Activated naive CD4-positive, alpha-beta T cell treated with anti-CD3 and anti-CD28 coated beads for 36 hours (primary cell): ENCODE measurements at regions of chr11 and their contacts with region 1.

Region 1: DNA sequence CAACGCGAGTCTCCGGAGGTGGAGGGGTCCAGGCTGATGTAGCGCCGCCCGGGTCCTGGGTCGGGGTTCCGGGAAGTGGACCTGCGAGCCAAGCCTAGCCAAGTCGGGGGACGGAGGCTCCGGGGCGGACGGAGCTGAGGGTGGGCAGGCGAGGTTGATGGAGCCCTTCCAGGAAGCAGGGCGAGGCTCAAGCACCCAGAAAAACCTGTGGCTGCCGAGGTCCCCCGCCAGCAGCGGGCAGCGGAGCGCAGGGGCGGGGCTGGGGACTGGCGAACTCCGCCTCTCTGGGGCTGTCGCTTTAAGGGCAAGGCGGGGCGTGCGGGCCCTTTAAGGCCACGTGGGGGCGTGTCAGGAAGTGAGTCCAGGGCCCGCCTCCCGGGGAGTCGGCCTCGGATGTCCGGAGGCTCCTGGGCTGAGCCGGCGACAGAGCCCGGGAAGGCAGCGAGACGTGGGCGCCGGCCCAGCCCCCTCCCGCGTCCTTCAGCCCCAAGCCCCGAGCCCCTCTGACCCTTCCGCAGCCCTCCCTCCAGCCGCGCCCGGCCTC is at the start of gene SLC35C1:
- DNase-seq: peak; percentile 97
- H3K4me3 Mint-ChIP-seq: peak within 1 kb of the TSS; percentile 90
- H3K27ac Mint-ChIP-seq: peak within 1 kb of the TSS; percentile 81
- H3K4me1 Mint-ChIP-seq: peaks cover 36% of the 10 kb centered on the region
- H3K27me3 Mint-ChIP-seq: no peaks in the 10 kb centered on the region
- total RNA-seq, gene SLC35C1: 5.6 to 6.5 TPM

Region 2: DNA sequence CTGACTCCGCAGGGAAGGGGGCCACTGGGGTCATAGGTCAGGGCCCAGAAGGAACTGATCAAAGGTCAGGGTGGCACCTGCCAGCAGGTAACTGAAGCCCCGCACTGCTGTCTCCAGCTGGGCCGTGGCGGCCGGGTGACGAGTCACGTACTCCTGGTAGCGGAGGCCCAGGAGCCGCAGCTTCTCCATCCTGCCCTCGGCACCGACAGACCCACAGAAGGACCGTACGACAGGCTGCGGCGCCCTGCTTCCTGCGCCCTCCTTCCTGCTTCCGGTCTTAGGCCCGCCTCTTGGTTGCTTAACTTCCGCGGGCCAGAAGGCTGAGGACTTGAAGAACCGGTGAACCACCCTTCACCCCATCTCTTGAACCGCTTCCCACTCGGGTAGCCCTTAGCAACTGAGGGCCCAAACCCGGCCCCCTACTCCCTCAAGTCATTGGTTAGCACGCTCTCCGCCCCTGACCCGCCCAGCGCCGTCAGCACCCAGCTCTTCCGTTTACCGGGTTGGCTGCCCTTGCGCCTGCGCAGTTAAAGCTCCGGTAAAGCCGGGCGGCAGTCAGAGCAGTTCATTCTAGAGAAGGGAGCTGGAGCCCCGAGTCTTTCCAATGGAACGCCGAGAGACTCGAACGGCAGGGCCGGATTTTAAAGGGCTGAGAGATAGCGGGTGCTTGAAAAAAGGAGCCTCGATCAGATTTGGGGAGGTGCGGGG is 112.9 kb after region 1 on chr11 and contains the start of gene PEX16:
- CTCF ChIA-PET with region 1: no interaction called
- intact Hi-C with region 1: loop called (anchors 1 kb)
- DNase-seq: peak; percentile 96
- H3K4me3 Mint-ChIP-seq: peak within 1 kb of the TSS; percentile 88
- H3K27ac Mint-ChIP-seq: peak within 1 kb of the TSS; percentile 96
- H3K4me1 Mint-ChIP-seq: peaks cover 24% of the 10 kb centered on the region
- H3K27me3 Mint-ChIP-seq: peaks cover 3% of the 10 kb centered on the region
- total RNA-seq, gene PEX16: 28.6 to 32.5 TPM

Region 3: DNA sequence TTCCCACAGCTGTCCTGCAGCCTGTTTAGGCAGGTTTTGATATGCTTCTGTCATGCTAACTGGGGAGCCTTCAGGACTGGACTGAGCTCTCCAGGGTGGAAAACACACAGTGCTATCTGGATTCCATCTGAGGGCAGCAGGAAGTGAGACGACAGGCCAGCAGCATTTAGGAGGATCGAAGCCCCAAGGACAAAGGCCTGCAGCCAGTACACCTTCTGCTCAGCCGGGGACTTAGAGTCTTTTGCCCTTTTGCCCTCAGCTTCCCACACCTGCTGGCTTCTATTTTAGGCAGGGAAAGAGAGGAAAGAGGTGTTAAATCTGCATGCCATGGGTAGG is 129.7 kb after region 1 on chr11:
- CTCF ChIA-PET with region 1: no interaction called
- intact Hi-C with region 1: no loop called
- DNase-seq: no peak
- H3K4me3 Mint-ChIP-seq: no peak overlapping the region
- H3K27ac Mint-ChIP-seq: no peak overlapping the region
- H3K4me1 Mint-ChIP-seq: peaks cover 17% of the 10 kb centered on the region
- H3K27me3 Mint-ChIP-seq: no peaks in the 10 kb centered on the region